ENCODE measurements at regions of chr7 and their contacts with region 1.

Region 1: GRCh38 chr7:26200444-26201246 is at the start of gene HNRNPA2B1:
- DNase-seq: peak; percentile 98 to 100 (median 99)
- H3K4me3 ChIP-seq: peak within 1 kb of the TSS; percentile 80 to 89
- H3K4me3 Mint-ChIP-seq: peak within 1 kb of the TSS; percentile 99 to 100 (median 100)
- H3K27ac ChIP-seq: peak within 1 kb of the TSS; percentile 98
- H3K27ac Mint-ChIP-seq: peak within 1 kb of the TSS; percentile 99 to 100 (median 100)
- H3K4me1 ChIP-seq: peaks cover 56% of the 10 kb centered on the region
- H3K4me1 Mint-ChIP-seq: peaks cover 38 to 76% (median 46%) of the 10 kb centered on the region in 4 donors
- H3K27me3 ChIP-seq: no peaks in the 10 kb centered on the region
- H3K27me3 Mint-ChIP-seq: peaks cover 0 to 4% of the 10 kb centered on the region in 2 donors
- total RNA-seq, gene HNRNPA2B1: 450 to 466 TPM

Region 2: DNA sequence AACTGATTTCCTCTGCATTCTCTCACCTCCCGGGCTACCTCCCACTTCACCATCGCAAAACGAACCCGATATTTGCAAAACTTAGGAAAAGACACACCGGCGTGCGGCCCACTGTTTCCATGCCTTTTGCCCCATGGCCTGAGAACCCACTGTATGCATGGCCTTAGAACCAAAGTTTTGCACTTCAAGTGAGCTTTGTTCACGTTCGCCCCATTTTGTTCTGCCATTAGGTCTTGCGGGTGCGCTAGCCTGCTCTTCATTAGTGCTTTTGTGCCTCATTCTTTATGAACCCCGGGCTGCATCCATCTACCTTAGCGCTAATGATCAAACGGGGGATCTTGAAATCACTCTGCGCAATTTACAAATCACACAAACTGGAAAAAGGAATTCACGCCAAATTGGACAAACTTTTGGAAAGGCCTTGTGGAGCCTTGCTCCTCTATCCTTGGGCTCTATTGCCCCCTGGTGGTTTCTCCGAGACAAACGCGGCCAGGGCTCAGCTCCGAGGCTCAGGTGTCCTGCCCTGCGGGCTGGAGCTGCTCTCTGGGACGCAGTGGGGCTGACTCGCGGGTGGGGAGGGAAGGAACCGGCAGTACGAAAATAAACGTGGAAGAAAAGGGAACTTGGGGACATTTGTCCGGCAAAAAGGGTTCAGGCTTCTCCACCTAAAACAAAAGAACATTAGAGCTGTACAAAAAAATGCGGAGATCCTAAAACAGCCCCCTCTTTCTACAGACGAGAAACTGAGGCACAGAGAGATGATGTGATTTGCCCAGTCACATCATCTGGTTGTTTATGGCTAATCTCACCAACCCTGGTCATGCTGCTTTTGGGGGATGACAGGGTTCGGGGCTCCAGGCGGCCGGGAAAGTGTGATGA is 349.1 kb before region 1 on chr7:
- CTCF ChIA-PET with region 1: no interaction called
- POLR2A ChIA-PET with region 1: no interaction called
- intact Hi-C with region 1: no loop called
- DNase-seq: peak; percentile 39 to 55 (median 45)
- H3K4me3 ChIP-seq: no peak overlapping the region
- H3K4me3 Mint-ChIP-seq: peak overlapping the region; percentile 6 to 91 (median 78)
- H3K27ac ChIP-seq: no peak overlapping the region
- H3K27ac Mint-ChIP-seq: peak overlapping the region in 5 of 7 donors; percentile 58 to 91 (median 89)
- H3K4me1 ChIP-seq: peaks cover 20% of the 10 kb centered on the region
- H3K4me1 Mint-ChIP-seq: peaks cover 5 to 30% (median 11%) of the 10 kb centered on the region in 4 donors
- H3K27me3 ChIP-seq: peaks cover 59% of the 10 kb centered on the region
- H3K27me3 Mint-ChIP-seq: peaks cover 49 to 53% of the 10 kb centered on the region in 2 donors

Region 3: GRCh38 chr7:25894902-25895791 is 305.5 kb before region 1 on chr7:
- CTCF ChIA-PET with region 1: interaction called, 12 read pairs
- POLR2A ChIA-PET with region 1: interaction called, 11 read pairs
- intact Hi-C with region 1: no loop called
- DNase-seq: peak; percentile 44 to 60 (median 51)
- H3K4me3 ChIP-seq: no peak overlapping the region
- H3K4me3 Mint-ChIP-seq: peak overlapping the region; percentile 50 to 94 (median 56)
- H3K27ac ChIP-seq: no peak overlapping the region
- H3K27ac Mint-ChIP-seq: peak overlapping the region in 4 of 7 donors; percentile 9 to 77 (median 43)
- H3K4me1 ChIP-seq: peaks cover 26% of the 10 kb centered on the region
- H3K4me1 Mint-ChIP-seq: peaks cover 16 to 24% (median 21%) of the 10 kb centered on the region in 4 donors
- H3K27me3 ChIP-seq: no peaks in the 10 kb centered on the region
- H3K27me3 Mint-ChIP-seq: peaks cover 0 to 3% of the 10 kb centered on the region in 2 donors

Region 4: DNA sequence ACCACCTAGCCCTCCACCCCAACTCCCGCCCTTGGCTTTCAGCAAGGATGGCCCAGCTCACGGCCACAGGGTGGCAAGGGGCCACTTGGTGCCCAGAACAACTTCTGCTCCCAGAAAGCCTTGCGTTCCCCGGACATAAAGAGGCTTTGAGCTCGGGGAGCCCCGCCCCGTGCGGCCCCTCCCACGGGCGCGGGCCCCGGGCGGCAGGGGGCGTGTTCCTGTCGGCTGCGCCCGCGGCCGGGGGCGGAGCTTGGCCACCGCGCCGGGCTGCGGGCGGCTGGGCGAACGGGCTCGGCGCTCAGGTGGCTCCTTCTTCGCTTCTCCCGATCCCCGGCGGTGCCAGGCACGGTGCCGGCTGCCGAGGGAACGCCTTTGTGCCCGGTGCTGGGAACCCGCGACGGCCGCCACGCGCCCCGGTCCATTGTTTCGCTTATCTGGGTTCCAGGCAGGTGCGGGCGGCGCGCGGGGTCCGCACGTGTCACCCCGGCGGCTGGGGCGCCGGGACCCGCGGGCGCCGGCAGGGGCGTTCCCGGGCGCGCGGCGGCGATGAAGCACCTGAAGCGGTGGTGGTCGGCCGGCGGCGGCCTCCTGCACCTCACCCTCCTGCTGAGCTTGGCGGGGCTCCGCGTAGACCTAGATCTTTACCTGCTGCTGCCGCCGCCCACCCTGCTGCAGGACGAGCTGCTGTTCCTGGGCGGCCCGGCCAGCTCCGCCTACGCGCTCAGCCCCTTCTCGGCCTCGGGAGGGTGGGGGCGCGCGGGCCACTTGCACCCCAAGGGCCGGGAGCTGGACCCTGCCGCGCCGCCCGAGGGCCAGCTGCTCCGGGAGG is 48.5 kb before region 1 on chr7 and contains the start of gene NFE2L3:
- CTCF ChIA-PET with region 1: interaction called, 32 read pairs
- POLR2A ChIA-PET with region 1: interaction called, 223 read pairs
- intact Hi-C with region 1: loop called (anchors 1 kb)
- DNase-seq: peak; percentile 80 to 84 (median 81)
- H3K4me3 ChIP-seq: peak within 1 kb of the TSS; percentile 89 to 93
- H3K4me3 Mint-ChIP-seq: peak within 1 kb of the TSS; percentile 91 to 99 (median 96)
- H3K27ac ChIP-seq: peak within 1 kb of the TSS; percentile 79
- H3K27ac Mint-ChIP-seq: peak within 1 kb of the TSS; percentile 94 to 98 (median 96)
- H3K4me1 ChIP-seq: peaks cover 52% of the 10 kb centered on the region
- H3K4me1 Mint-ChIP-seq: peaks cover 42 to 56% (median 49%) of the 10 kb centered on the region in 4 donors
- H3K27me3 ChIP-seq: no peaks in the 10 kb centered on the region
- H3K27me3 Mint-ChIP-seq: no peaks in the 10 kb centered on the region
- total RNA-seq, gene NFE2L3: 7.5 to 7.9 TPM

Region 5: GRCh38 chr7:26180792-26181198 is 19.9 kb before region 1 on chr7:
- CTCF ChIA-PET with region 1: interaction called, 10 read pairs
- POLR2A ChIA-PET with region 1: interaction called, 369 read pairs
- intact Hi-C with region 1: loop called (anchors 2 kb)
- DNase-seq: no peak
- H3K4me3 ChIP-seq: no peak overlapping the region
- H3K4me3 Mint-ChIP-seq: no peak overlapping the region
- H3K27ac ChIP-seq: no peak overlapping the region
- H3K27ac Mint-ChIP-seq: peak overlapping the region in 4 of 7 donors; percentile 1 to 81 (median 20)
- H3K4me1 ChIP-seq: peaks cover 34% of the 10 kb centered on the region
- H3K4me1 Mint-ChIP-seq: peaks cover 31 to 68% (median 44%) of the 10 kb centered on the region in 4 donors
- H3K27me3 ChIP-seq: no peaks in the 10 kb centered on the region
- H3K27me3 Mint-ChIP-seq: no peaks in the 10 kb centered on the region

Region 6: GRCh38 chr7:26278770-26279169 is 78.1 kb after region 1 on chr7:
- CTCF ChIA-PET with region 1: no interaction called
- POLR2A ChIA-PET with region 1: interaction called, 6 read pairs
- intact Hi-C with region 1: loop called (anchors 5 kb)
- DNase-seq: peak in 4 of 5 donors; percentile 14 to 33 (median 26)
- H3K4me3 ChIP-seq: no peak overlapping the region
- H3K4me3 Mint-ChIP-seq: peak overlapping the region in 1 of 8 donors; percentile 25
- H3K27ac ChIP-seq: no peak overlapping the region
- H3K27ac Mint-ChIP-seq: no peak overlapping the region
- H3K4me1 ChIP-seq: peaks cover 5% of the 10 kb centered on the region
- H3K4me1 Mint-ChIP-seq: peaks cover 8 to 19% (median 12%) of the 10 kb centered on the region in 4 donors
- H3K27me3 ChIP-seq: no peaks in the 10 kb centered on the region
- H3K27me3 Mint-ChIP-seq: no peaks in the 10 kb centered on the region

Region 7: GRCh38 chr7:26667500-26668133 is 467.0 kb after region 1 on chr7:
- CTCF ChIA-PET with region 1: no interaction called
- POLR2A ChIA-PET with region 1: no interaction called
- intact Hi-C with region 1: loop called (anchors 5 kb)
- DNase-seq: peak; percentile 58 to 67 (median 59)
- H3K4me3 ChIP-seq: no peak overlapping the region
- H3K4me3 Mint-ChIP-seq: no peak overlapping the region
- H3K27ac ChIP-seq: no peak overlapping the region
- H3K27ac Mint-ChIP-seq: no peak overlapping the region
- H3K4me1 ChIP-seq: peaks cover 16% of the 10 kb centered on the region
- H3K4me1 Mint-ChIP-seq: peaks cover 9 to 19% (median 13%) of the 10 kb centered on the region in 4 donors
- H3K27me3 ChIP-seq: no peaks in the 10 kb centered on the region
- H3K27me3 Mint-ChIP-seq: peaks cover 2 to 3% of the 10 kb centered on the region in 2 donors